ENCODE measurements at regions of chr5 and their contacts with region 1.

Region 1: GRCh38 chr5:30918171-30918570 is 275.3 kb upstream of the CDH6 start:
- DNase-seq: no peak
- H3K4me3 ChIP-seq: no peak overlapping the region
- H3K27ac ChIP-seq: no peak overlapping the region
- H3K4me1 ChIP-seq: no peaks in the 10 kb centered on the region
- H3K27me3 ChIP-seq: no peaks in the 10 kb centered on the region
- CTCF ChIP-seq: no peak
- POLR2A ChIP-seq: no peak

Region 2: DNA sequence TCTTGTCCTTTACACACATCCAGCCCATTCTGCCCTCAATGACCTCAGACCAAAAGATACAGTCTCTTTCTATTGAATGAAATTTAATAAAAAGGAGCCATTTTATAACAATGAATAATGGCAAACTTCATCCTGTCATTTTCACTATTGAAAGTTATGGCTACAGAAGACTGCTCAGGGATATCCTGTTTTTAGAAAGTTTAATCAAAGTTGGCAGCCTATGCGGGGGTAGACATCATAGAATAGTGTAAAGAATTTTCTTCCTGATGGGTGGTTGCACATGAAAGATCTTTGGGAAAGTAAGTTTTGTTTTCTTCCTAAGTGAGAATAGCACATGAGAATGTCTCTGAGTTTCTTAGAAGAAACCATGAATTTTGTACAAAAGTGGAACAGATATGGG is 395.1 kb before region 1 on chr5:
- intact Hi-C with region 1: loop called (anchors 5 kb)
- DNase-seq: no peak
- H3K4me3 ChIP-seq: no peak overlapping the region
- H3K27ac ChIP-seq: no peak overlapping the region
- H3K4me1 ChIP-seq: no peaks in the 10 kb centered on the region
- H3K27me3 ChIP-seq: no peaks in the 10 kb centered on the region
- CTCF ChIP-seq: no peak
- POLR2A ChIP-seq: no peak